Calu3 (cell line): ENCODE measurements at regions of chr1 and their contacts with region 1.

Region 1: GRCh38 chr1:99825098-99825497 is 25.1 kb upstream of the AGL start:
- DNase-seq: no peak
- H3K4me3 Mint-ChIP-seq: no peak overlapping the region
- H3K27ac Mint-ChIP-seq: no peak overlapping the region
- H3K4me1 Mint-ChIP-seq: no peaks in the 10 kb centered on the region
- H3K27me3 Mint-ChIP-seq: no peaks in the 10 kb centered on the region
- CTCF ChIP-seq: no peak

Region 2: DNA sequence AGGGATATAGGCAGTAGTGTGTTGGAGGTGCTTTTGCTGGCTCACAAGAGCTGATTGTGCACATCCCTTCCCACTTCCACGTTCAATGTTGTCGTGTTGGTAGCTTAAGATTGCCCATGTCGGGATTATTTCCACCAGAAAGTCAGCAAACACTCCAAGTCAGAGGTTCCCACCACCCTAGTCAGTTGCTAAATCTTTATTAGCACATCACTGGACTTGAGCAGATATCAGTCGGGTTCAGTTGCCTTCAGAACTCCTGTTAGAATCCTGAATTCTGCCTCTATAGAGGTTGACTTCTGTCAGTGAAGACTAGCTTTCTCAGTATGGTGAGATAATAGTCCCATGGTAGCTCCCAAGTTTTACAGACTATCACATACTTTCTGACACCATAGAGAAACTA is 35.6 kb after region 1 on chr1:
- CTCF ChIA-PET with region 1: no interaction called
- intact Hi-C with region 1: loop called (anchors 2 kb)
- DNase-seq: no peak
- H3K4me3 Mint-ChIP-seq: no peak overlapping the region
- H3K27ac Mint-ChIP-seq: no peak overlapping the region
- H3K4me1 Mint-ChIP-seq: no peaks in the 10 kb centered on the region
- H3K27me3 Mint-ChIP-seq: no peaks in the 10 kb centered on the region
- CTCF ChIP-seq: no peak

Region 3: DNA sequence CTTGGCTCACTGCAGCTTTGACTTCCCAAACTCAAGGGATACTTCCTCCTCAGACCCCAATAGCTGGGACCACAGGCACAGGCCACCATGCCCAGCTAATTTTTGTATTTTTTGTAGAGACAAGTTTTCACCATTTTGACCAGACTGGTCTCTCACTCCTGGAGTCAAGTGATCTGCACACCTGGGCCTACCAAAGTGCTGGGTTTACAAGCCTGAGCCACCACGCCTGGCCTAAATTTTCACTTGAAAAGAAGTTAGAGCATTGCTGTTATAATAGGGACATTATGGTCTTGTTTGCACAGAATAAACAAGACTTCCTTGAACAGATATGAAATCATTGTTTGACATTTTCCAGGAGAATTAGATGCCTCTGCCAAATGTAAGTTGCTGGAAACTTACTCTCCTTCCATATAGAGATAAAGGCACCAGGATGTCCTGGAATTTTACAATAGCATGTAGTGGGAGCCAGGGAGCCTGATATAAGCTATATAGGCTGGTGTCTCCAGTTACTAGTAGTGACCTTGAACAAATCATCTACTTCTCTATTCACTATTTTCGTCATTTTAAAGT is 161.6 kb after region 1 on chr1:
- CTCF ChIA-PET with region 1: no interaction called
- intact Hi-C with region 1: no loop called
- DNase-seq: no peak
- H3K4me3 Mint-ChIP-seq: no peak overlapping the region
- H3K27ac Mint-ChIP-seq: no peak overlapping the region
- H3K4me1 Mint-ChIP-seq: no peaks in the 10 kb centered on the region
- H3K27me3 Mint-ChIP-seq: no peaks in the 10 kb centered on the region
- CTCF ChIP-seq: no peak